ENCODE measurements at regions of chr11 and their contacts with region 1.

Region 1: DNA sequence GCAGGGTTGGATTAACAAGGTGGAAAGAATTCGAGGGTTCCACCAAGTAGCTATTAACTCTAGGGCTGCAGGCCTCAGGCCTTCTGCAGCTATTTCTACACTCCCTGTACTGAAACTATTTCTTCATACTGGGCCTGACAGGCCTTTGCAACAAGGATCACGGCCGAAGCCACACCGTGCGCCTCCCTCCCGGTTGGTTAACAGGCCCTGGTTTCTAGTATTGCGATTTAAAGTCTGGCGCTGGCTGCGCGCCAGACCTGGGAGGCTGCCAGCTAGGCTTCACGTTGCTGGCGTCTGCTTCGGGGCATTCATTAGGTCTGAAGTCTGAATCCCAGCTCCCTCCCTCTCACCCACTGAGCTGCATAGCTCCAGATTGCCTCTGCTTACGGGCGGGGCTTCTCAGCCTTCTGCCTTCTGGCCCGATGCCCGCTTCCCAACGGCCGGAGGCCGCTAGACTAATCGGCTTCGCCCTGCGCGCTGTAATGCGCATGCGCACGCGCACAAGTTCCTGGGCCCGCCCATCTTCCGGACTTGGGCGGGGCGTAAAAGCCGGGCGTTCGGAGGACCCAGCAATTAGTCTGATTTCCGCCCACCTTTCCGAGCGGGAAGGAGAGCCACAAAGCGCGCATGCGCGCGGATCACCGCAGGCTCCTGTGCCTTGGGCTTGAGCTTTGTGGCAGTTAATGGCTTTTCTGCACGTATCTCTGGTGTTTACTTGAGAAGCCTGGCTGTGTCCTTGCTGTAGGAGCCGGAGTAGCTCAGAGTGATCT is 1.6 kb downstream of the LDHA start:
- DNase-seq: peak; percentile 98
- ATAC-seq: peak; percentile 77
- H3K4me3 ChIP-seq: peak overlapping the region; percentile 93
- H3K27ac ChIP-seq: peak overlapping the region; percentile 82
- H3K4me1 ChIP-seq: peaks cover 22% of the 10 kb centered on the region
- H3K27me3 ChIP-seq: no peaks in the 10 kb centered on the region
- CTCF ChIP-seq: no peak

Region 2: DNA sequence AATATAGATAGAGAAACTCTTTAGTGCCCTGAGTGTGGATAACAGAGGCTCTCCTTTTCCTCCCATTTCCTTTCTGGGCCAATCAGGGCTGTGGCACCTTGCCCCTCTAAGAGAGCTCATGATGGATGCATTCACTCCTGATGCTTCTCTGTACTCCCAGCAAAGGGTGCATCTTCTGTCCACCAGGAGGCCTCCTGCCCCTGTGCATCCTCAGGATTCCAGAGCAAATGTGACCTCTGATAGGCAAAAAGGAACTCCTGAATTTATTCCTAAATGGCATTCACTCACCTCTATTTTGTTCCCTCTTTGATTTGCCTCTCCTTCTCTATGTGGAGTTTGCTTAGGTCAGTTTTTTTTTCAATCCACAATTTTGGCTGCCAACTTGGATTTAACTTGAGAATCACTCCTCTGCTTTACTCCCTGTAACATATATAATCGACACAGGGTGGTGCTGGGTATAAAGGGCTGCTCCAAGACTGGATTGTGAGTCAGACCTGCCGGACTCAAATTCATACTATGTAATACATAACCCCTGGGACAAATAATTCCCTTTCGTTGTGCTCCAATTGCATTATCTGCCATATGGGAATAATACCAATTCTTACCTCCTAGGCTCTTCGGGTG is 224.4 kb before region 1 on chr11:
- CTCF ChIA-PET with region 1: no interaction called
- POLR2A ChIA-PET with region 1: interaction called, 12 read pairs
- intact Hi-C with region 1: no loop called
- DNase-seq: peak; percentile 51
- ATAC-seq: peak; percentile 97
- H3K4me3 ChIP-seq: no peak overlapping the region
- H3K27ac ChIP-seq: no peak overlapping the region
- H3K4me1 ChIP-seq: no peaks in the 10 kb centered on the region
- H3K27me3 ChIP-seq: peaks cover 43% of the 10 kb centered on the region
- CTCF ChIP-seq: peak; percentile 74

Region 3: DNA sequence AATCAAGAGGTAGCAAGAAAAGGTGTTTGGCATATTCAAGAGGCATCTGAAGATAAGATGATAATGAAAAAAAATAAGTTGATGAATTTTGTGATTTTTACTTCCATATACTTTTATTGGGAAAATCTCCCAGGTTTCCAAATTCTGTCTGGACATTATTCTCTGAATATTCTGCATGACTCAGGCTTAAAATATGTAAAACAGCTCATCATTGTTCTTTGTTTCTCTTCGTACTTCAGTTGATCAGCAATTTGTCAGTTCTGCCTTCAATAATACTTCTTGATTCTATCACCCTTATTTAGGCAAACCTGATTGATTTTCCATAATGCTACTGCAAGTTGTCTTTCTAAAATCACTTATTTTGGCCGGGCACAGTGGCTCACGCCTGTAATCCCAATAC is 43.3 kb before region 1 on chr11:
- CTCF ChIA-PET with region 1: no interaction called
- POLR2A ChIA-PET with region 1: interaction called, 3 read pairs
- intact Hi-C with region 1: loop called (anchors 5 kb)
- DNase-seq: peak; percentile 48
- ATAC-seq: no peak
- H3K4me3 ChIP-seq: no peak overlapping the region
- H3K27ac ChIP-seq: no peak overlapping the region
- H3K4me1 ChIP-seq: peaks cover 16% of the 10 kb centered on the region
- H3K27me3 ChIP-seq: no peaks in the 10 kb centered on the region
- CTCF ChIP-seq: no peak

Region 4: GRCh38 chr11:18383388-18384156 is 12.3 kb before region 1 on chr11:
- CTCF ChIA-PET with region 1: interaction called, 5 read pairs
- POLR2A ChIA-PET with region 1: interaction called, 28 read pairs
- intact Hi-C with region 1: loop called (anchors 1 kb)
- DNase-seq: peak; percentile 96
- ATAC-seq: peak; percentile 91
- H3K4me3 ChIP-seq: peak overlapping the region; percentile 50
- H3K27ac ChIP-seq: peak overlapping the region; percentile 99
- H3K4me1 ChIP-seq: peaks cover 22% of the 10 kb centered on the region
- H3K27me3 ChIP-seq: no peaks in the 10 kb centered on the region
- CTCF ChIP-seq: no peak